ENCODE measurements at regions of chr3 and their contacts with region 1.

Region 1: DNA sequence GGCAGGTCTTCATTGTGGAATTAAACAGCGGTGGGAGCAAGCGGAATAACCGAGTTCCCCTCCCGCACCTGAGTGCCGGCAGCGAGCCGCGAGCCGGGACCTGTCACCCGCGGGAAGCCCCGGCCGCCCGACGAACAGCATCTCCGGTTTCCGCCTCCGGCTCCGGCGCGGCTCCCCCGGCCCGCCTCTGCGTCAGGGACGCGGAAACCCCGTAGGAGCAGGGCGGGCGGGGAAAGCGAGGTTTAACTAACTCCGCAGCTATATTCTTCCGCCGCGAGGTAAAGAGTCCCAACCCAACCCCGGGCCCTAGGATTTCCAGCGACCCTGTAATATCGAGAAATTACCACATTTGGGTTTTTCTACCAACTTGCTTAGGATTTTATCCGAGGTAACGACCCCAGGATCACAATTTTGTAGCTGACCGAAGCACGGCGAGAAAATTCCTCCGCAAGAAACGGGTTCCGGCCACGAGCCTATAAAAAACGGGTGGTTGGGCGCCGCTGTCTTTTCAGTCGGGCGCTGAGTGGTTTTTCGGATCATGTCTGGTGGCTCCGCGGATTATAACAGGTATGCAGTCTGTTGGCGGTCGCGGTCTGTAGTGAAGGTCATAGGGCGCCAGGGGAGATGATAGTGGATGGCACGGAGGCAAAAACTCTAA is at the start of gene EIF4A2:
- DNase-seq: peak; percentile 79 to 96 (median 88)
- ATAC-seq: peak; percentile 67
- H3K4me3 ChIP-seq: peak within 1 kb of the TSS; percentile 90 to 95
- H3K4me3 Mint-ChIP-seq: peak within 1 kb of the TSS; percentile 99
- H3K27ac ChIP-seq: peak within 1 kb of the TSS; percentile 93 to 97
- H3K27ac Mint-ChIP-seq: peak within 1 kb of the TSS; percentile 99
- H3K4me1 ChIP-seq: peaks cover 38% of the 10 kb centered on the region
- H3K4me1 Mint-ChIP-seq: peaks cover 52% of the 10 kb centered on the region
- H3K27me3 ChIP-seq: no peaks in the 10 kb centered on the region
- H3K27me3 Mint-ChIP-seq: no peaks in the 10 kb centered on the region
- CTCF ChIP-seq: no peak
- total RNA-seq, gene EIF4A2: 934 to 978 TPM

Region 2: DNA sequence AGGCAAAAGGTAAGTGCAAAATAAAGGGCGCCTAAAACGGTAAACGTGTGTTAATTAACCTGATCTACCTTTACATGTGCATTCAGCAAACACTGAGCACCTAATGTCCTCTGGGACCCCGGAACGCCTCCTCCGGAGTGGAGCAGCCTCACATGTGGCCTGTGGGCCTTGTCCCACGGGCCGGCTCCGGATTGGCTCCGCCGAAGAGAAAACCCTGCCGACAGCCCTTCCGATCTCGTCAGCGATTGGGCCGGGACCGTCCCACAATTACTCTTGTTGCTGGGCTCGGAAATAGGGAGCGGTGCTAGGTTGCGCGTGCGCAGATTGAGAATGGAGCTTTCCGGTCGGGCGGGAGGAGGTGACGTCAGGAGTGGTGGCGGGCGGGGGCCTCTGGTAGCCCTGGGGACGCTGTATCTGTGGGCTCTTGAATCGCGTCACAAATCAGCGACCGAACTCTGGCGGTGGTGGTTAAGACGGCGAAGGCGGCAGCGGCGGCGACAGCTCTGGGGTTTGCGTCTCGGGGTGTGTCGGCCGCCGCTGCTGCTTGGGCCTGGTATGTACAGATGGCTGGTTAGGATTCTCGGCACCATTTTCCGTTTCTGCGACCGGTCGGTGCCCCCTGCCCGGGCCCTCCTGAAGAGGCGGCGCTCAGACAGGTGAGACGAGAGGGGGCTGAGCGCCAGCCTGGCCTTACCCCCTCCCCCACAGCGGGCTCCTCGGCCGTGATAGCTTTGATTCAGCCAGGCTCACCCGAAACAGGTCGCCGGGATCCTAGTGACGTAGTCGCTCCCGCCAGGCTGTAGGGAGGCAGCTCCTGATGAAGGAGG is 1197.1 kb before region 1 on chr3 and contains the start of gene SENP2:
- CTCF ChIA-PET with region 1: no interaction called
- POLR2A ChIA-PET with region 1: interaction called, 3 read pairs
- intact Hi-C with region 1: loop called in 1 of 2 experiments (anchors 5 kb)
- DNase-seq: peak; percentile 99 to 100 (median 100)
- ATAC-seq: peak; percentile 87
- H3K4me3 ChIP-seq: peak within 1 kb of the TSS; percentile 74 to 100
- H3K4me3 Mint-ChIP-seq: peak within 1 kb of the TSS; percentile 85
- H3K27ac ChIP-seq: peak within 1 kb of the TSS; percentile 92 to 99
- H3K27ac Mint-ChIP-seq: peak within 1 kb of the TSS; percentile 92
- H3K4me1 ChIP-seq: peaks cover 28% of the 10 kb centered on the region
- H3K4me1 Mint-ChIP-seq: peaks cover 36% of the 10 kb centered on the region
- H3K27me3 ChIP-seq: no peaks in the 10 kb centered on the region
- H3K27me3 Mint-ChIP-seq: no peaks in the 10 kb centered on the region
- CTCF ChIP-seq: no peak
- total RNA-seq, gene SENP2: 57.0 to 69.6 TPM

Region 3: DNA sequence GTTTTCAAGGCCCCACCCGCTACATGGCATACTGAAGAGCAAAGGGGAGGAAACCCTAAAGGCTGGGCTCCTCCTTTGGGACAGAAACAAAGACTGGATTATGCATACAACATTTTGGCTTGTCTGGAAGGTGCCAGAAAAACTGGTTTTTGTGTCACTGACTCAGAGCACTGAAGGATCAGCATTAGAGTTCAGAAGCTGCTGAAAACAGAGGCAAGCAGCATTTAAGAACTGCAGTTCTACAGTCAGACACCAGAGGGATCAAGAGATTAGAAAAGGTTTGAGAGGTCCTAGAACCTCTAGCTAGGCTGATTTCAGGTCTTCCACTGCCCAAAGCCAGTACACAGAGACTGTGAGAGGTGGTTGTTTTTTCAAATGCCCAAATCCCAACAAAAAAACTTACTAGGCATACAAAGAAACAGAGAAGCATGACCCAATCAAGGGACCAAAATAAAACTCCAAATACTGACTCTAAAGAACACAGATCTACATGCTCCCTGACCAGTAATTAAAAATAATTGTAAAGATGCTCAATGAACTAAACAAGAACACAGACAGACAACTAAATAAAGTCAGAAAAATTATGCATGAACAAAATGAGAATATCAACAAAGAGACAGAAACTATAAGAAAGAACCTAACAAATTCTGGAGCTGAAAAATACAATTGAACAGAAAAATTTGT is 1105.9 kb before region 1 on chr3:
- CTCF ChIA-PET with region 1: no interaction called
- POLR2A ChIA-PET with region 1: no interaction called
- intact Hi-C with region 1: no loop called
- DNase-seq: peak in 1 of 9 experiments; percentile 4
- ATAC-seq: no peak
- H3K4me3 ChIP-seq: no peak overlapping the region
- H3K4me3 Mint-ChIP-seq: no peak overlapping the region
- H3K27ac ChIP-seq: no peak overlapping the region
- H3K27ac Mint-ChIP-seq: no peak overlapping the region
- H3K4me1 ChIP-seq: no peaks in the 10 kb centered on the region
- H3K4me1 Mint-ChIP-seq: no peaks in the 10 kb centered on the region
- H3K27me3 ChIP-seq: no peaks in the 10 kb centered on the region
- H3K27me3 Mint-ChIP-seq: peaks cover 2% of the 10 kb centered on the region
- CTCF ChIP-seq: no peak

Region 4: DNA sequence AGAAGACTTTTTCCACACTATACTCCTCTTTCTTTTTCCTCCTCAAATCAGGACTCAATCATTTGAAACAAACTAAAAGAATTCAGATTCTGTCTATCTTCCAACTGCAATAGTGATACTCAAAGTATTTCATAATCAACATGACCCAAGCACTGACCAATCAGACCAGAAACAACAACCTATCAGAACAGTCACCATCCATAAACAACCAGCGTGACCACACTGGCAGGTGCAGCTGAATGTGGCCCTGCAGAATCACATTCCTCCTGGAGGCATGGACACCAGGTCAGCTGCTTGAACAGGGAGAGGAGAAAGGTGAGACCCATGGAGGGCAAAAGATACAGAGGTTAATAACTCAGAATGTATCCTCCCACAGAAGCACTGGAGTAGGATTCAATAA is 104.1 kb before region 1 on chr3:
- CTCF ChIA-PET with region 1: no interaction called
- POLR2A ChIA-PET with region 1: no interaction called
- intact Hi-C with region 1: no loop called
- DNase-seq: no peak
- ATAC-seq: no peak
- H3K4me3 ChIP-seq: no peak overlapping the region
- H3K4me3 Mint-ChIP-seq: no peak overlapping the region
- H3K27ac ChIP-seq: no peak overlapping the region
- H3K27ac Mint-ChIP-seq: no peak overlapping the region
- H3K4me1 ChIP-seq: no peaks in the 10 kb centered on the region
- H3K4me1 Mint-ChIP-seq: no peaks in the 10 kb centered on the region
- H3K27me3 ChIP-seq: peaks cover 0 to 10% of the 10 kb centered on the region in 2 experiments
- H3K27me3 Mint-ChIP-seq: peaks cover 41% of the 10 kb centered on the region
- CTCF ChIP-seq: no peak

Region 5: GRCh38 chr3:186772701-186773424 is 10.3 kb before region 1 on chr3:
- CTCF ChIA-PET with region 1: interaction called, 8 read pairs
- POLR2A ChIA-PET with region 1: interaction called, 139 read pairs
- intact Hi-C with region 1: loop called in 1 of 2 experiments (anchors 1 kb)
- DNase-seq: peak; percentile 8 to 81 (median 61)
- ATAC-seq: peak; percentile 86
- H3K4me3 ChIP-seq: peak overlapping the region; percentile 70 to 77
- H3K4me3 Mint-ChIP-seq: peak overlapping the region; percentile 97
- H3K27ac ChIP-seq: peak overlapping the region; percentile 55 to 86
- H3K27ac Mint-ChIP-seq: peak overlapping the region; percentile 95
- H3K4me1 ChIP-seq: peaks cover 12% of the 10 kb centered on the region
- H3K4me1 Mint-ChIP-seq: peaks cover 17% of the 10 kb centered on the region
- H3K27me3 ChIP-seq: no peaks in the 10 kb centered on the region
- H3K27me3 Mint-ChIP-seq: no peaks in the 10 kb centered on the region
- CTCF ChIP-seq: no peak

Region 6: DNA sequence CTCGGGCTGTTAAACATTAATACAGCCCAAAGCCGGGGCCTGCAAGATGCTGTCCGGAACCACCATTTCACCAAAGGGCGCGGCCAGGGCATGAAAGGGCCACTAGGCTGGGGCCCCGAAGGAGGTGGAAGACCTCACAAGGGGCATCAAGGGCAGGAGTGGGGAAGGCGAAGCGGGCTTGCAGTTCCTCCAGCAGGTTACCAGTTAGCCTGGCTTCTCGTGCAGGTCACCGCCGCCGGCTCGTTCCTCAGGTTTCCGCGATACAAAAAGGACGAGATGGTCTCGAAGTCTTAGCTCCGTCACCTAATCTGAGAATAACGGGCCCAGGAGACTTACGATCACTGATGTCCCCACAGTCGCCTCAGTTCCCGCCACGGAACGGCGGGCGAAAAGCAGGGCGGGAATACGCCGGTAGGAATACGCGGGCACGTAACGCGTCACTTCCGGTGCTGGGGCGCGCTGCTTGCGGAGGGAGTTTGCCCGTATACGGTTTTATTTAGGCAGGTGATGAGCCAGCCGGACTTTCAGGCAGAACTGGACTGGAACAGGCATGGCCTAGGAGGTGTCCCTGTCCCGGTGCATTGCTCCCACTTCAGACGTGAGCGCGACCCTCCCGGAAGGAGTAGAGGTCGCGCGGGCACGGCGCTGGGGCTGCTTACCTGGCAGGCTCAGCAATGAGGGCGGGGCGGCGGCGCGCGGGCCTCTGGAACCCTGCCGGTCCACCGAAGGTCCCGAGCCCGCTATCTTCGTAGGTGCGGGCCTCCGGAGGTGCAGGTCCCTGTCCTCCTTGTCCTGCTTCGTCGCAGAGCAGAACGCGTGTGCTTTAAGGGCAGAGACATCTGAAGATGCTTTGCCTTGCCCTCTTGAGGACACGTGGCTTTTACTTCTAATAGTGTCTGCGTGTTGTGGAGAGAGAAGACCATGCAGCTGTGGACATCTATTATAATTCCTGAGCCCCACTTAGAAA is 23.2 kb after region 1 on chr3 and contains the start of gene RFC4:
- CTCF ChIA-PET with region 1: no interaction called
- POLR2A ChIA-PET with region 1: interaction called, 59 read pairs
- intact Hi-C with region 1: loop called (anchors 1 kb)
- DNase-seq: peak; percentile 60 to 91 (median 85)
- ATAC-seq: peak; percentile 86
- H3K4me3 ChIP-seq: peak within 1 kb of the TSS; percentile 81 to 97
- H3K4me3 Mint-ChIP-seq: peak within 1 kb of the TSS; percentile 97
- H3K27ac ChIP-seq: peak within 1 kb of the TSS; percentile 89 to 92
- H3K27ac Mint-ChIP-seq: peak within 1 kb of the TSS; percentile 97
- H3K4me1 ChIP-seq: peaks cover 23% of the 10 kb centered on the region
- H3K4me1 Mint-ChIP-seq: peaks cover 22% of the 10 kb centered on the region
- H3K27me3 ChIP-seq: no peaks in the 10 kb centered on the region
- H3K27me3 Mint-ChIP-seq: no peaks in the 10 kb centered on the region
- CTCF ChIP-seq: no peak
- total RNA-seq, gene RFC4: 12.7 to 13.9 TPM

Region 7: GRCh38 chr3:187025656-187026316 is 242.6 kb after region 1 on chr3:
- CTCF ChIA-PET with region 1: no interaction called
- POLR2A ChIA-PET with region 1: interaction called, 17 read pairs
- intact Hi-C with region 1: loop called in 1 of 2 experiments (anchors 5 kb)
- DNase-seq: peak in 4 of 9 experiments; percentile 39 to 72 (median 48)
- ATAC-seq: peak; percentile 3
- H3K4me3 ChIP-seq: peak overlapping the region; percentile 52 to 71
- H3K4me3 Mint-ChIP-seq: peak overlapping the region; percentile 83
- H3K27ac ChIP-seq: peak overlapping the region; percentile 62 to 64
- H3K27ac Mint-ChIP-seq: peak overlapping the region; percentile 97
- H3K4me1 ChIP-seq: peaks cover 44% of the 10 kb centered on the region
- H3K4me1 Mint-ChIP-seq: peaks cover 68% of the 10 kb centered on the region
- H3K27me3 ChIP-seq: no peaks in the 10 kb centered on the region
- H3K27me3 Mint-ChIP-seq: no peaks in the 10 kb centered on the region
- CTCF ChIP-seq: no peak

Measured in CD8-positive, alpha-beta T cell (primary cell).